ENCODE measurements at regions of chr14 and their contacts with region 1.

Region 1: DNA sequence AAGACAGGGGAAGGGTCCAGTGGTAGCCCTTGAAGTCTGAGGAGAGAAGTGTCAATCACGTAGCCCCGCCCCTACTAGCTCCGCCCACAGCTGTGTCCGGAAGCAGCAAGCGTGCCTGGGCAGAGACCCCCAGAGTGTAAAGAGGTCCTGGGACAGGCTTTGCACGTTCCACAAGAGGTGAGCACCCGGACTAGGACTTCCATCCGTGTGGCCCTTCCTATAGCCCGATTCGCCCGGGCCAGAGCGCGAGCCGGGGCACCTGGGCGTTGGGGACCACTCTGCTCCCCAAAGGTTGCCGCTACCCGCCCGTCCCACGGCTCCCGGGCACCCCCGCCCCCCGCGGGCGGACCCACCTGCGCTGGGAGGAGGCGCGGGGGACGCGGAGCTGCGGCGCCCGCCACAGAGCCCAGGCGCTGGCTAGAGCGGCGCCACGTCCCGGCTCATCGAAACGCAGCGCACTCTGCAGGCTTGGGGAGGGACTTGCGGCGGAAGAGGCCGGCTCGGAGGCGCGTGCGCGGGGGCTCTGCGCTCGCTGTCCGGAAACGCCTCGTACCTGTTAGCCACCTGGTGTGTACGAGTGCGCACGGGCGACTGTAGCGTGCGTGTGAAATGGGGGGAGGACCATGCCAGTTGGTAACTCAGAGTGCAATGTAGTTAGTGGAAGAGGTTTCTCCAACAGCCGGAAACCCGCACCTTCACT is at the start of gene RABGGTA:
- DNase-seq: peak; percentile 91
- ATAC-seq: peak; percentile 88
- H3K4me3 Mint-ChIP-seq: peak within 1 kb of the TSS; percentile 95
- H3K27ac Mint-ChIP-seq: peak within 1 kb of the TSS; percentile 97
- H3K4me1 Mint-ChIP-seq: peaks cover 37% of the 10 kb centered on the region
- H3K27me3 Mint-ChIP-seq: no peaks in the 10 kb centered on the region
- total RNA-seq, gene RABGGTA: 42.1 to 48.8 TPM

Region 2: DNA sequence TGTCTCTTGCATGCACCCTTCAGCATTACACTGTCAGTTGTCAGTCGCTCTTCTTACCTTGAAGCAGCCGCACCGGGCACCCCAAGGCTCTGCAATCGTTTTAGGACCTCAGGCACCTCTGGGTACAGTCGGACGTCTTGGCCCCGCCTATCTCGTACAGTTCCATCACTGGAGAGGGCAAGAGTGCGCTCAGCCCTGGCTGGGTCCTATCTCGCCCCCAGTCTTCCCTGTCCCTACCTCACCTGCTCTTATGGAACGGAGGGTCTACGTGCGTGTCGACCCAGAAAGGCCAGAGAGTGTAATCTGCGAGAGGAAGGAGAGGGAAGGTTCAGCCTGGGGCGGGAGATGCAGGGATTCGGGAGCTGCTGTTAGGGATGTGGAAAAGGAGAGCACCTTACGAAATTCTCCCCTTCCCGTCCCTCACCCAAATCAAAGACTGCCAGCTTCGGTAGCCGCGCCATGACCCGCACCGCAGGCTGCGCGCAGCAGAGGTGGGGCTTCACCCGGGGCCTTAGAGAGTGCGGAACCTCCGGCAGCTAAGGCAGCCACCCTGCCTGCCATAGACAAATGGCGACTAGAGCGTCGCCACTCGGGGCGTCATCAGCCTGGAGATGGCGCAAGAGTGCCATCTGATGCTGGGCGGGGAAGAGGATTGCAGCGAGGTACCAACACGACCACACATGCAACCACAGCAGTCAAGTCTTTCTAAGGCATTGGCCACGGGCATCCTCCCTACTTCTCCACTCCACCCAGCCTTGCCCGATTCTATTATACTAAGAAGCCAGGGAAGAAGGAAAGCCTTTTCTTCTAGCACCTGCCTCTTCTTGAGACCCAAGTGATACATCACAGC is 55.6 kb before region 1 on chr14 and contains the start of gene MDP1:
- POLR2A ChIA-PET with region 1: interaction called, 12 read pairs
- DNase-seq: peak; percentile 85
- ATAC-seq: peak; percentile 73
- H3K4me3 Mint-ChIP-seq: peak within 1 kb of the TSS; percentile 93
- H3K27ac Mint-ChIP-seq: peak within 1 kb of the TSS; percentile 98
- H3K4me1 Mint-ChIP-seq: peaks cover 38% of the 10 kb centered on the region
- H3K27me3 Mint-ChIP-seq: no peaks in the 10 kb centered on the region
- total RNA-seq, gene MDP1: 11.9 to 15.4 TPM

Region 3: GRCh38 chr14:24289649-24290249 is 18.5 kb after region 1 on chr14:
- POLR2A ChIA-PET with region 1: interaction called, 13 read pairs
- DNase-seq: peak; percentile 67
- ATAC-seq: peak; percentile 97
- H3K4me3 Mint-ChIP-seq: peak overlapping the region; percentile 41
- H3K27ac Mint-ChIP-seq: no peak overlapping the region
- H3K4me1 Mint-ChIP-seq: peaks cover 32% of the 10 kb centered on the region
- H3K27me3 Mint-ChIP-seq: peaks cover 18% of the 10 kb centered on the region

Region 4: GRCh38 chr14:24299255-24300195 is 28.2 kb after region 1 on chr14 and contains the starts of genes DHRS1 and NOP9:
- POLR2A ChIA-PET with region 1: interaction called, 15 read pairs
- DNase-seq: peak; percentile 97
- ATAC-seq: peak; percentile 82
- H3K4me3 Mint-ChIP-seq: peak within 1 kb of the TSS; percentile 94
- H3K27ac Mint-ChIP-seq: peak within 1 kb of the TSS; percentile 95
- H3K4me1 Mint-ChIP-seq: peaks cover 41% of the 10 kb centered on the region
- H3K27me3 Mint-ChIP-seq: no peaks in the 10 kb centered on the region
- total RNA-seq, gene DHRS1: 36.0 to 41.9 TPM
- total RNA-seq, gene NOP9: 28.7 to 31.1 TPM

Region 5: GRCh38 chr14:24310646-24311604 is 39.6 kb after region 1 on chr14 and contains the start of gene LTB4R:
- POLR2A ChIA-PET with region 1: interaction called, 13 read pairs
- DNase-seq: peak; percentile 83
- ATAC-seq: peak; percentile 88
- H3K4me3 Mint-ChIP-seq: peak within 1 kb of the TSS; percentile 84
- H3K27ac Mint-ChIP-seq: peak within 1 kb of the TSS; percentile 84
- H3K4me1 Mint-ChIP-seq: peaks cover 66% of the 10 kb centered on the region
- H3K27me3 Mint-ChIP-seq: no peaks in the 10 kb centered on the region
- total RNA-seq, gene LTB4R: 27.0 to 27.8 TPM

Region 6: GRCh38 chr14:24327303-24327702 is 56.0 kb after region 1 on chr14:
- POLR2A ChIA-PET with region 1: no interaction called
- DNase-seq: peak; percentile 32
- ATAC-seq: no peak
- H3K4me3 Mint-ChIP-seq: peak overlapping the region; percentile 65
- H3K27ac Mint-ChIP-seq: peak overlapping the region; percentile 86
- H3K4me1 Mint-ChIP-seq: peaks cover 41% of the 10 kb centered on the region
- H3K27me3 Mint-ChIP-seq: peaks cover 9% of the 10 kb centered on the region

Region 7: DNA sequence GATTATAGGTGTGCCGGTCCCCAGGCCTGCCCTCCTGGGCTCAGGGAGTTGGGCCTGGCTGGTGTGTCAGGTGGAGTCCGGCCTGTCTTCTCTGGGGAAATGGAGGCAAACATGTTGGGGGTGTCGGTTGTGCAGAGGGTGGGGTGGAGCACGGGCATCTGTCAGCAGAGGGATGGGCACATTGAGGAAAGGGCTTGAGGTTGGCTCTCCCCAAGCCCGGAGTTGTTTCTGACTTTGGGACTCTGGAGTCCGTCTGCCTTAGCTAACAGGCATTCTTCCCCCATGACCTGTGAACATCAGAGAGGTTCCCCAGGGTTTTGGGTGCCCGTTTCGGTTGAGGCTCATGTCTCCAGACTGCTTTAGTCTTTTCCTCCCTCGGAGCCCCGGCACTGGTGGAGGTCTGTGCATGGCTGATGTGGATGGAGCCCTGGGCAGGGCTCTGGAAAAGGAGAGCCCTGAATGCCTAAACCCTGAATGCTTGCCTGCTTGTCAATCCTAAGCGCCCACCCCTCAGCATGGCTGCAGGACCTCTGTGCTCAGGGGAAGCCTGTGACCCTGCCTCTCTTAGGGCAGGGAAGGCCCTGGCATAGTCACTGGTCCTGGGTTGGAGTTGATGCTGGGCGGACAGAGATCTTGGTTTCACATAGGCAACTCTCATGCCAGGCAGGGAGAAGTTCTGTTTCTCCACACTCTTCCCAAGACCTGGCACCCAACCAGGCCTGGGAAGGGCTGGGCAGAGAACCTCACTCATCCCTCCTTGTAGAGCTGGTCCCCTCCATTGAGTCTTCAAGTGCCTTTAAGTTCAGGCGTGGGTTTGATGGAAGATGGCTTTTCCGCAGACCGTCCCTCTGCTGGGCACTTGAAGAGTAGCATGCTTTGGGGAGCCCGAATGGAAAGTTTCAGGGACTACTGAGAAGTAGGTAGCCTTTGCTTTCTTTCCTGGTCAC is 140.4 kb after region 1 on chr14:
- POLR2A ChIA-PET with region 1: no interaction called
- DNase-seq: no peak
- ATAC-seq: peak; percentile 41
- H3K4me3 Mint-ChIP-seq: no peak overlapping the region
- H3K27ac Mint-ChIP-seq: no peak overlapping the region
- H3K4me1 Mint-ChIP-seq: no peaks in the 10 kb centered on the region
- H3K27me3 Mint-ChIP-seq: peaks cover 15% of the 10 kb centered on the region